ENCODE measurements at regions of chr11 and their contacts with region 1.

Region 1: GRCh38 chr11:723120-723883 is 17.3 kb downstream of the EPS8L2 start:
- DNase-seq: no peak
- H3K4me3 ChIP-seq: no peak overlapping the region
- H3K27ac ChIP-seq: no peak overlapping the region
- H3K4me1 ChIP-seq: peaks cover 13% of the 10 kb centered on the region
- H3K27me3 ChIP-seq: no peaks in the 10 kb centered on the region
- CTCF ChIP-seq: peak; percentile 31 to 78 (median 72)
- POLR2A ChIP-seq: no peak

Region 2: GRCh38 chr11:555780-556661 is 167.3 kb before region 1 on chr11:
- intact Hi-C with region 1: loop called (anchors 2 kb)
- DNase-seq: no peak
- H3K4me3 ChIP-seq: peak overlapping the region; percentile 28 to 45
- H3K27ac ChIP-seq: peak overlapping the region in 1 of 2 donors; percentile 11
- H3K4me1 ChIP-seq: peaks cover 12% of the 10 kb centered on the region
- H3K27me3 ChIP-seq: no peaks in the 10 kb centered on the region
- CTCF ChIP-seq: no peak
- POLR2A ChIP-seq: no peak

Region 3: DNA sequence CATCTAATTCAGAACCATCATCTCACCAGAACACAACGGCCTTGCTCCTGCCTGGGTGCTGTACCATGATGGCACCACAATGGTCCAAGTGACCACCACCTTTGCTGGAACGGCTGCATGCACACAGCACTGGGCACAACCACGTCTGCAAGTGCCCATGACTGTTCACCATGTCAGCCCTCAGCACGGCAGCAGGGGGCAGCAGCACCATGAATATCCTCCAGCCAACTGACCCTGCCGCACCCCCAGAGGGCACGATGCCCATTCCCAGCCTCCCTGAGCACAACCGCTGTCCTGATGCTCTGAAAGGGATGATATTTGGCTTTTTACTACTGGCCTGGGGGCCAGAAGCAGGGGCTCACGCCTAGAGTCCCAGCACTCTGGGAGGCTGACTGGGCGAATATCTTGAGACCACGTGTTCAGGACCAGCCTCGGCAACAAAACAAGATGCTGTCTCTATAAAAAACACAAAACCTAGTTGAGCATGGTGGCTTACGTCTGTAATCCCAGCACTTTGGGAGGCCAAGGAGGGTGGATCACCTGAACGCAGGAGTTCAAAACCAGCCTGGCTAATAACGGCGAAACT is 60.5 kb before region 1 on chr11:
- intact Hi-C with region 1: loop called (anchors 2 kb)
- DNase-seq: no peak
- H3K4me3 ChIP-seq: no peak overlapping the region
- H3K27ac ChIP-seq: no peak overlapping the region
- H3K4me1 ChIP-seq: no peaks in the 10 kb centered on the region
- H3K27me3 ChIP-seq: no peaks in the 10 kb centered on the region
- CTCF ChIP-seq: peak; percentile 33 to 82 (median 74)
- POLR2A ChIP-seq: no peak

Measured in prostate gland (tissue), 2 donors.